K562 (cell line): ENCODE measurements at regions of chr17 and their contacts with region 1.

Region 1: GRCh38 chr17:78112518-78113226 is 15.9 kb downstream of the TMC6 start:
- DNase-seq: peak; percentile 80 to 88 (median 84)
- ATAC-seq: peak; percentile 92
- H3K4me3 ChIP-seq: no peak overlapping the region
- H3K27ac ChIP-seq: 0 out of 3 replicates have a peak overlapping the region, but pooled peaks have one; percentile 34
- H3K4me1 ChIP-seq: peaks cover 0 to 52% of the 10 kb centered on the region in 2 experiments; a peak in 2 of 5 replicates
- H3K27me3 ChIP-seq: no peaks in the 10 kb centered on the region
- CTCF ChIP-seq: peak; percentile 94 to 97 (median 95)
- EP300 ChIP-seq: no peak
- POLR2A ChIP-seq: peak; percentile 75
- RAD21 ChIP-seq: peak; percentile 93

Region 2: GRCh38 chr17:78032166-78032565 is 80.5 kb before region 1 on chr17:
- CTCF ChIA-PET with region 1: no interaction called
- POLR2A ChIA-PET with region 1: no interaction called
- in situ Hi-C with region 1: no loop called
- intact Hi-C with region 1: no loop called
- DNase-seq: peak; percentile 46 to 64 (median 53)
- ATAC-seq: peak; percentile 83
- H3K4me3 ChIP-seq: no peak overlapping the region
- H3K27ac ChIP-seq: peak overlapping the region; percentile 43; the same call in 2 of the 3 replicates
- H3K4me1 ChIP-seq: peaks cover 33 to 57% of the 10 kb centered on the region in 2 experiments; a peak in 4 of 5 replicates
- H3K27me3 ChIP-seq: no peaks in the 10 kb centered on the region
- CTCF ChIP-seq: no peak
- EP300 ChIP-seq: no peak
- POLR2A ChIP-seq: no peak
- RAD21 ChIP-seq: no peak

Region 3: GRCh38 chr17:78159575-78160158 is 47.0 kb after region 1 on chr17:
- CTCF ChIA-PET with region 1: no interaction called
- POLR2A ChIA-PET with region 1: no interaction called
- in situ Hi-C with region 1: no loop called
- intact Hi-C with region 1: no loop called
- DNase-seq: no peak
- ATAC-seq: no peak
- H3K4me3 ChIP-seq: no peak overlapping the region
- H3K27ac ChIP-seq: peak overlapping the region; percentile 3; the same call in 1 of the 3 replicates
- H3K4me1 ChIP-seq: peaks cover 14 to 42% of the 10 kb centered on the region in 2 experiments; a peak in 4 of 5 replicates
- H3K27me3 ChIP-seq: no peaks in the 10 kb centered on the region
- CTCF ChIP-seq: no peak
- EP300 ChIP-seq: no peak
- POLR2A ChIP-seq: no peak
- RAD21 ChIP-seq: no peak

Region 4: DNA sequence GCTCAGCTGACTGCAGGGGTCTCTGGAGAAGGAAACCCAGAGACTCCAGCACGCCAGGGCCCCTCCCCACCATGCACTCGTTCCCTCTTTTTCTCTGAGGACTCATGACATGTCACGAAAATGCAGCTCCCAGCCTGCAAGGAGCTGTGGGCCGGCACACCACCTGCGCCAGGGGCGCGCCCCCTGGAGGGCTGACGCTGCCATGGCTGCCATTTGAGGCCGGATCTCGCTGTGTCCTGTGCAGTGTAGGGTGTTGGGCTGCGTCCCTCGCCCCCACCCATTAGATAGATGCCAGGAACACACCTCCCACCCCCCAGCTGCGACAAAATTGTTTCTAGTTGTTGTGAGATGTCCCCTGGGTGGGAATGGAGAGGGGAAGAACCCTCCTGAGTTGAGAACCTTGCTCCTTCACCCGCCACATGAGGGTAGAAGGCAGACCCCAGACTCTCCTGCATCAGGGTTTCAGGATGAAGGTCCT is 63.9 kb after region 1 on chr17:
- CTCF ChIA-PET with region 1: interaction called, 34 read pairs
- POLR2A ChIA-PET with region 1: interaction called, 25 read pairs
- in situ Hi-C with region 1: loop called (anchors 5 kb)
- intact Hi-C with region 1: loop called (anchors 1 kb)
- DNase-seq: peak; percentile 71 to 86 (median 76)
- ATAC-seq: peak; percentile 90
- H3K4me3 ChIP-seq: no peak overlapping the region
- H3K27ac ChIP-seq: peak overlapping the region; percentile 31; the same call in 1 of the 3 replicates
- H3K4me1 ChIP-seq: peaks cover 7 to 43% of the 10 kb centered on the region in 2 experiments
- H3K27me3 ChIP-seq: no peaks in the 10 kb centered on the region
- CTCF ChIP-seq: peak; percentile 92 to 97 (median 94)
- EP300 ChIP-seq: no peak
- POLR2A ChIP-seq: peak; percentile 53
- RAD21 ChIP-seq: peak; percentile 72 to 86

Region 5: GRCh38 chr17:78641243-78641642 is 528.6 kb after region 1 on chr17:
- CTCF ChIA-PET with region 1: no interaction called
- POLR2A ChIA-PET with region 1: no interaction called
- in situ Hi-C with region 1: no loop called
- intact Hi-C with region 1: no loop called
- DNase-seq: no peak
- ATAC-seq: no peak
- H3K4me3 ChIP-seq: no peak overlapping the region
- H3K27ac ChIP-seq: no peak overlapping the region
- H3K4me1 ChIP-seq: no peaks in the 10 kb centered on the region
- H3K27me3 ChIP-seq: peaks cover 28 to 69% of the 10 kb centered on the region in 2 experiments
- CTCF ChIP-seq: no peak
- EP300 ChIP-seq: no peak
- POLR2A ChIP-seq: no peak
- RAD21 ChIP-seq: no peak